ENCODE measurements at regions of chr20 and their contacts with region 1.

Region 1: GRCh38 chr20:4720041-4720976 is 1.4 kb upstream of the PRND start:
- DNase-seq: peak; percentile 92
- H3K4me3 ChIP-seq: peak overlapping the region; percentile 49
- H3K27ac ChIP-seq: peak overlapping the region; percentile 28
- H3K4me1 ChIP-seq: peaks cover 14% of the 10 kb centered on the region
- CTCF ChIP-seq: peak; percentile 96

Region 2: DNA sequence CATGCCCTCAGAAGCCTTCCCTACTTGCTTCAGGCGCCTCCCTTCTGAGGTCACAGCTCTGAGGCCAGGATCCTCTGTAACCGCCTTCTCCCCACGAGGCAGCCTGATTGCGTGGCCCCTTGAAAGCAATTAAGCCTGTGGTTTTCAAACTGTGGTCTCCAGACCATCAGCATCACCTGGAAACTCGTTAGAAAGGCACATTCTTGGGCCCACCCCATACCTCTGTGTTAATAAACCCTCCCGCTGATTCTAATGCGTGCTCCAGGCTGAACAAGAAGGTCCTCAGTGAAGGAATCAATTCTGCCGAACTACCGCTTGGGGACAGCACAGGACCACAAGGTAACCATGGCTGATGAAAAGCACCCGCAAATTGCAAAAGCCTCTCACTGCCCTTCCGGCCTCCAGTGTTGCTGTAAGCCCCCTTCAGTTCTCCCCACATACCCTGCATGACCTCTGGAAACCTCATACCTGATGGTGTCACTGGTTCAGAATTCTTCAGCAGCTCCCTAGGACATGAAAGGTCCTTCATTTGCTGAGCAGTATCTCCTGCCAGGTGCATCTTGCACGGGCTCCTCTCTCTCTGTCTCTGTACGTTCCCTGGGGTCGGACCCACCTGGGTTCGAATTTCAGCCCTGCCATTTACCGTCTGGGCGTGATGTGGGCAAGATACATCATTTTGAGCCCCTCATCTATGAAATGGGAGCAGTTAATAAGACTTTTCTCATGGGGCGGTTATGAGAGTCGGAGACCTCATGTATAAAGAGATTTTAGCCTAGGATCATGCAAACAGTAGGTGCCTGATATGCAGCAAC is 611.6 kb before region 1 on chr20:
- CTCF ChIA-PET with region 1: no interaction called
- POLR2A ChIA-PET with region 1: no interaction called
- intact Hi-C with region 1: loop called (anchors 2 kb)
- DNase-seq: peak; percentile 83
- H3K4me3 ChIP-seq: no peak overlapping the region
- H3K27ac ChIP-seq: no peak overlapping the region
- H3K4me1 ChIP-seq: peaks cover 4% of the 10 kb centered on the region
- CTCF ChIP-seq: peak; percentile 94

Region 3: DNA sequence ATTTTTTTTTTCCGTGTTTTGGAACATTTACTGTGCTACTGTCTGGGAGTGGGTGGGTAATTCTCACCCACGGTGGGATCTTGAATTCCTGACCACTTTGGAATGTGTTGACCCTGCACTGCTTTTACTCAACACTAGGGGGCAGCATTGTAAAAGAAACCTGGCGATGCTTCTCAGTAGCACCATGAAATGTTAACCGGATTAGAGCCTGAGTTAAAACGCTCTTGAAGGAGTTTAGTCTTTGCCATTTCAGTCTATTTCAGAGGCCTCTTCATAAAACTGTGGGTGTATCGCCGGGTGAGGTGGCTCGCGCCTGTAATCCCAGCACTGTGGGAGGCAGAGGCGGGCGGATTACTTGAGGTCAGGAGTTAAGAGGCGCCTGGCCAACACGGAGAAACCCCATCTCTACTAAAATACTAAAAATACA is 113.0 kb before region 1 on chr20:
- CTCF ChIA-PET with region 1: interaction called, 3 read pairs
- POLR2A ChIA-PET with region 1: interaction called, 5 read pairs
- intact Hi-C with region 1: loop called (anchors 1 kb)
- DNase-seq: peak; percentile 74
- H3K4me3 ChIP-seq: no peak overlapping the region
- H3K27ac ChIP-seq: no peak overlapping the region
- H3K4me1 ChIP-seq: no peaks in the 10 kb centered on the region
- CTCF ChIP-seq: peak; percentile 98

Region 4: DNA sequence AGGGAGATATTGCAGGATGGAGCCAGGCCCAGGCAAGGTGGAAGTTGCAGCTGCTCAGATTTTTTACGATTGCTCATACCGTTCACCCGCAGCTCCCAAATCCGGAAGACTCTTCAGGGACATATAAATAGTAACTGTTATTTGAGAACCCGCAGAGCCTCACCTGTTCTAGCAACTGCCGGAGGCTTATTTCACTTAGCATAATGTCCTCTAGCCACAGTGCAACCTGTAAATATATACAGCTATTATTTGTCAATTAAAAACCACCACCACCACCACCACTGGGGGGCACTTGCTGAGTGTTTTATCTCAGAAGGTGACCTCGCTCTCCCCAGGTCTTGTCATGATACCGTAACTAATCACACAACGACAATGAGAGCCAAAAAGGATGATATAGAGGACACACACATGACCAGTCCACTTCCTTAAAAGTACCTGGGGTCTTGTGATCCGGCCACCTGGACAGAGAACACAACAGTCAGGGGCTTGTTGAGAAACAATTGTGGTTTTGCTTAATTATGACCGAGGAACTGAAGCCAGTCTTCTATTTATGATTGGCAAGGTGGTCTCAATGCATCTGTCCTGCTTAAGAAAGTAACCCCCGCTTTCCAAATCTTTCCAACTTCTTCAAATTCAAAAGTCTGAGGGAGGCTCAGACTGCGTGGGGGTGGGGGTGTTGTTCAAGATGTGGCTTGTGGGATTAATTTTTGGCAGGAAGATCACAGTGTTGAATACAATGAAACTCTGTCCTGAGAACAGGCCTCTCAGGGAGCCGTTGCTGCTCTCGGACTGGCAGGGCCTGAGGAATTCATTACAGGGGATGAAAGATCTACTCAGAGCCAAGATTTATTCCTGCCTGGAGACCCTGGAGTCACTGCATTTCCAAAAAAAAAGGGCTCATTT is 106.3 kb before region 1 on chr20:
- CTCF ChIA-PET with region 1: interaction called, 7 read pairs
- POLR2A ChIA-PET with region 1: interaction called, 3 read pairs
- intact Hi-C with region 1: loop called (anchors 1 kb)
- DNase-seq: peak; percentile 62
- H3K4me3 ChIP-seq: no peak overlapping the region
- H3K27ac ChIP-seq: no peak overlapping the region
- H3K4me1 ChIP-seq: peaks cover 10% of the 10 kb centered on the region
- CTCF ChIP-seq: peak; percentile 79

Measured in OCI-LY7 (cell line).